Esophagus muscularis mucosa (tissue), 4 donors: ENCODE measurements at regions of chrX and their contacts with region 1.

Region 1: GRCh38 chrX:7996414-7996813 is 69.2 kb upstream of the PNPLA4 start:
- DNase-seq: no peak
- H3K4me3 ChIP-seq: no peak overlapping the region
- H3K27ac ChIP-seq: no peak overlapping the region
- H3K4me1 ChIP-seq: no peaks in the 10 kb centered on the region
- H3K27me3 ChIP-seq: no peaks in the 10 kb centered on the region
- CTCF ChIP-seq: peak; percentile 52 to 63 (median 54)
- EP300 ChIP-seq: no peak
- POLR2A ChIP-seq: no peak

Region 2: DNA sequence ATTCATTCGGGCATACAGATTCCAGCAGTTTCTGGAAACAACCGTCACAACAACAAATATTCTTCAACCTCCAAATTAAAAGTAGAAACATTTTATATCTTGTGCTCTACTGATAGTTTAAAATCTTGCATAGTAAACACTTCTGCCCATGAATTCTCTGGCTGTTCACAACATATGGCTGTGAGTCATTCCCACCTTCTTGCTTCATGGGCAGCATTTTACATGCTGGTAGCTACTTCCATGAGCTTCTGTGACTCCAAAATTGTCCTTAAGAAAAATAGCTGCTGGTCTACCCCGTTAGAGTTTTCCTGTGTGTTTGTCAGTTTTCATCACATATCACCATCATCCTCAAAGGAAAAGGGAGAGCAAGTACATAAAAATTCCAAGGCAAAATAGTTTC is 91.9 kb before region 1 on chrX:
- intact Hi-C with region 1: no loop called
- DNase-seq: no peak
- H3K4me3 ChIP-seq: no peak overlapping the region
- H3K27ac ChIP-seq: no peak overlapping the region
- H3K4me1 ChIP-seq: no peaks in the 10 kb centered on the region
- H3K27me3 ChIP-seq: no peaks in the 10 kb centered on the region
- CTCF ChIP-seq: no peak
- EP300 ChIP-seq: no peak
- POLR2A ChIP-seq: no peak

Region 3: GRCh38 chrX:8036914-8037313 is 40.5 kb after region 1 on chrX:
- intact Hi-C with region 1: no loop called
- DNase-seq: no peak
- H3K4me3 ChIP-seq: no peak overlapping the region
- H3K27ac ChIP-seq: peak overlapping the region in 2 of 4 donors; percentile 48 to 52
- H3K4me1 ChIP-seq: peaks cover 6 to 25% (median 19%) of the 10 kb centered on the region in 4 donors
- H3K27me3 ChIP-seq: no peaks in the 10 kb centered on the region
- CTCF ChIP-seq: no peak
- EP300 ChIP-seq: no peak
- POLR2A ChIP-seq: no peak

Region 4: GRCh38 chrX:8364369-8365141 is 368.1 kb after region 1 on chrX:
- intact Hi-C with region 1: loop called (anchors 10 kb)
- DNase-seq: no peak
- H3K4me3 ChIP-seq: no peak overlapping the region
- H3K27ac ChIP-seq: no peak overlapping the region
- H3K4me1 ChIP-seq: peaks cover 0 to 4% (median 0%) of the 10 kb centered on the region in 4 donors
- H3K27me3 ChIP-seq: no peaks in the 10 kb centered on the region
- CTCF ChIP-seq: peak; percentile 33 to 47 (median 33)
- EP300 ChIP-seq: no peak
- POLR2A ChIP-seq: no peak

Region 5: GRCh38 chrX:8738588-8739189 is 742.3 kb after region 1 on chrX:
- intact Hi-C with region 1: loop called (anchors 2 kb)
- DNase-seq: no peak
- H3K4me3 ChIP-seq: no peak overlapping the region
- H3K27ac ChIP-seq: no peak overlapping the region
- H3K4me1 ChIP-seq: no peaks in the 10 kb centered on the region
- H3K27me3 ChIP-seq: no peaks in the 10 kb centered on the region
- CTCF ChIP-seq: peak; percentile 56 to 59 (median 56)
- EP300 ChIP-seq: no peak
- POLR2A ChIP-seq: no peak

Region 6: GRCh38 chrX:8815464-8816065 is 819.2 kb after region 1 on chrX:
- intact Hi-C with region 1: loop called (anchors 10 kb)
- DNase-seq: no peak
- H3K4me3 ChIP-seq: no peak overlapping the region
- H3K27ac ChIP-seq: no peak overlapping the region
- H3K4me1 ChIP-seq: no peaks in the 10 kb centered on the region
- H3K27me3 ChIP-seq: no peaks in the 10 kb centered on the region
- CTCF ChIP-seq: peak; percentile 63 to 71 (median 67)
- EP300 ChIP-seq: no peak
- POLR2A ChIP-seq: no peak